ENCODE measurements at regions of chr14 and their contacts with region 1.

Region 1: DNA sequence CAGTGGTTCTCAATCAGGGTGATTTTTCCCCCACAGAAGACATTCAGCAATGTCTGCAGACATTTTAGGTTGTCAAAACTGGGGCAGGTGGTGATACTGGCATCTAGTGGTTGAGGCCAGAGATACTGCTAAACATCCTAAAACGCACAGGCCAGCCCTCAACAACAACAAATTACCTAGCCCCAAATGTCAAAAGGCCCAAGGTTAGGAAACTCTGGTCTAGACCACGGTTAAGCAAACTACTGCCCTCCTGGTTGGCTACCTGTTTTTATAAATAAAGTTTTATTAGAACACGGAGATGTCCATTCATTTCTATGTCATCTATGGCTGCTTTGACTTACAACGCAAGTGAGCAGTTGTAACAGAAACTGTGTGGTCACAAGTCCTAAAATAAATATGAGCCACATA is 186.7 kb downstream of the EFCAB11 start:
- DNase-seq: peak; percentile 28
- ATAC-seq: peak; percentile 92
- H3K4me3 Mint-ChIP-seq: no peak overlapping the region
- H3K27ac Mint-ChIP-seq: peak overlapping the region; percentile 67
- H3K4me1 Mint-ChIP-seq: peaks cover 31% of the 10 kb centered on the region
- H3K27me3 Mint-ChIP-seq: no peaks in the 10 kb centered on the region
- CTCF ChIP-seq: peak; percentile 20

Region 2: DNA sequence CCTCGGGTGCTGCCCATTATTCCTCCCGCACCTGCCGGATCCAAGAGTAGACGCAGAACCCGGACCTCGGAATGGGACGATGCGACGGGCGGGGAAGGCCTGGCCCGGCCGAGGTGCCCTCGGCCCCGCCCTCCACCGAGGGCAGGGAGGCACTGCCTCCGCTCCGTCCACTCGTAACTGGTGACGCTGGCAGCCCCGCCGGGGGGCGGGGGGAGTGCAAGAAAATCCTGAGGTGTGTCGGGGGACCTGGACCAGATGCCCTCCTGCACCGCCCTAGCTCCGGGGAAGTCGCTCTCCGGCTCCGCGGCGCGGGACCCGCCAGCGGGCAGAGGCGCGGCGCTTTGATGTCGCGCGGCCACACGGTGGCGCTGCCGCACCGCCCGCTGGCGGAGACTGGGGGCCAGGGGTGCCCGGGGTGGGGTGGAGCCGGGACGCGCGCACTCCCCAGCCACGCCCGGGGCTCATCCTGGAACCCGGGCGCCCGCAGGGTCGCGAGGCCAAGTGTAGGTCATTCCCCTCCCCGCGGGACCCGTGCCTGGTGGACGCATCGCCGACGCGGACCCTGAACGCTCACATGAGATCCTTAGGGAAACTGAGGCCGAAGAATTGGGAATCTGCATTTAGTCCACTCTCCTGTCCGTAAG is 740.6 kb before region 1 on chr14:
- CTCF ChIA-PET with region 1: interaction called, 5 read pairs
- POLR2A ChIA-PET with region 1: no interaction called
- intact Hi-C with region 1: loop called (anchors 1 kb)
- DNase-seq: peak; percentile 67
- ATAC-seq: peak; percentile 92
- H3K4me3 Mint-ChIP-seq: peak overlapping the region; percentile 65
- H3K27ac Mint-ChIP-seq: no peak overlapping the region
- H3K4me1 Mint-ChIP-seq: peaks cover 3% of the 10 kb centered on the region
- H3K27me3 Mint-ChIP-seq: peaks cover 41% of the 10 kb centered on the region
- CTCF ChIP-seq: peak; percentile 54

Region 3: DNA sequence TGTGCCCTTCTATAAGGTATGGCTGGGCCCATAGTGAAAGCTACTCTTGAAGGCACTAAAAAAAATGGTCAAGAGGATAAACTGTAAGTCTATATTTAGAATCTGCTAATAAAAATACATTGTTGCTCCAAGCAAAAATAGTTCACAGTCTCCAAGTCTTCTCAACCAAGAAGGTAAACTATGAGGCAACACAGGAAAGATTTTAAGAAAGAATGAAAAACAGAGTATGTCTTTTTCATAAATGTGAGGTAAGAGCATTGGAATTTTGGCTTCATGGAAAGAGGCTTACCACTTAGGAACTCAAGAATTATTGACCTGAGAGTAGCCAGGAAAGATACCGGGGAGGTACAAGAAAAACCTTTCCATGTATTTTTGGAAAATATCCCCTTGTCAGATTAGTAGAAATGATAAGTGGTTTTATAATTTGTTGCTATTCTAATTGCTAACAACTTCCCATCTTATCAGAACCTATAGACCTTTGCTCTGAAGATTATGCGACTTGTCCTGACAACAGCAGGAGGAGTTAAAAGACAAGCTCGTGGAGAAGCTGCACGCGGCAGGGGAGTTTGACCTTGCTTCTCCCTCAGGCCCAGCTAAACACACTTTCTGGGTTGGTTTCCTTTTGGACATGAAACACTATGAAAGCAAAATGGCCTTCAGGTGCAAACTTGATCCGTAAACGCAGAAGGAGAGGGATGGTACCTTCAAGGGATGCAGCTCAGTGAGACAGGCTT is 588.9 kb before region 1 on chr14:
- CTCF ChIA-PET with region 1: interaction called, 14 read pairs
- POLR2A ChIA-PET with region 1: no interaction called
- intact Hi-C with region 1: loop called (anchors 1 kb)
- DNase-seq: no peak
- ATAC-seq: no peak
- H3K4me3 Mint-ChIP-seq: no peak overlapping the region
- H3K27ac Mint-ChIP-seq: peak overlapping the region; percentile 31
- H3K4me1 Mint-ChIP-seq: peaks cover 19% of the 10 kb centered on the region
- H3K27me3 Mint-ChIP-seq: no peaks in the 10 kb centered on the region
- CTCF ChIP-seq: no peak

Region 4: DNA sequence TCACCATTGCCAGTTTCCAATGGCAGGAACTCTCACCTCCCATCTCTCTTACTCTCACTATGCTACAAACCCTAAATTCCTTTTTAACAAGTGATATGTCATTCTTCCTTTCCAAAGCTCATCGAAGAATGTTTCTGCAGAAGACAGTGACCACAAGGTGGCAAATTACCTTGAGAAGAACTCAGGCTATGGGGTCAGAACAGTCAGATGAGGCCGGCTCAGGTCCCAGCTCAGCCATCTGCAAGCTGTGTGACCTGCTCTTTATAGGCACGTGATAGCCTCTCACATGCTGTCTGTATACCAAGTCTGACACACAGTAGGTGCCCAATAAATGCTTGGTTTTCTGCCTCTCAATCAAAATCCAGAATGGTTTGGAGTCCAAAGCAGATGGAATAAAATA is 431.5 kb before region 1 on chr14:
- CTCF ChIA-PET with region 1: interaction called, 14 read pairs
- POLR2A ChIA-PET with region 1: no interaction called
- intact Hi-C with region 1: loop called (anchors 1 kb)
- DNase-seq: no peak
- ATAC-seq: peak; percentile 69
- H3K4me3 Mint-ChIP-seq: no peak overlapping the region
- H3K27ac Mint-ChIP-seq: peak overlapping the region; percentile 66
- H3K4me1 Mint-ChIP-seq: peaks cover 71% of the 10 kb centered on the region
- H3K27me3 Mint-ChIP-seq: no peaks in the 10 kb centered on the region
- CTCF ChIP-seq: no peak

Region 5: DNA sequence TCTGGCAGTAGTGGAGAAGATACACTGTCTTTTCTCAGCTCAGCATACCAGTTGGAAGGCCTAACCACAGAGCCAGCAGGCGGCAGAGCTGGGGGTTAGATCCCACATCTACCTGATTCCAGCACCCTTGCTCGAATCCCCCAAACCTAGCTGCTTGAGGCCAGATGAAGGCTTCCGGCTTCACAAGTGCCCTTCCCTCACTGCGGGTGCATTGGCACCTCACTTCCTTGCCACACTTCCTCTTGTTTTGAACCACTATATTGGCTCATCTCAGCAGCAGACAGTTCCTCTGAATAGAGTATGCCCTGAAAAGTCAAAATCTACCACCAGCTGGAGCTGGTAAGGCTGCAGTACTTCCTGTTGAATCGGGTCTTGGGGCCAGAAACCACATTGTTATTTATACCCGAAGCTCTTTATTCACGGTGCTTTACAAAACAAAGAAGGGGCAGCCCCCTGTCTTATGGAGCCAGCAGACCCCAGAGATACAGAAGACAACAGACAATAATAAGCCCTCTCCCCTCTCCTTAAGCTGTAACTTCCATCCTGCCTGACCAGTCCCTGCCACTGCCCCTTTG is 47.0 kb before region 1 on chr14:
- CTCF ChIA-PET with region 1: interaction called, 9 read pairs
- POLR2A ChIA-PET with region 1: interaction called, 5 read pairs
- intact Hi-C with region 1: loop called (anchors 1 kb)
- DNase-seq: peak; percentile 45
- ATAC-seq: peak; percentile 90
- H3K4me3 Mint-ChIP-seq: peak overlapping the region; percentile 69
- H3K27ac Mint-ChIP-seq: peak overlapping the region; percentile 95
- H3K4me1 Mint-ChIP-seq: peaks cover 66% of the 10 kb centered on the region
- H3K27me3 Mint-ChIP-seq: no peaks in the 10 kb centered on the region
- CTCF ChIP-seq: no peak

Region 6: GRCh38 chr14:89757313-89757939 is 10.4 kb before region 1 on chr14:
- CTCF ChIA-PET with region 1: no interaction called
- POLR2A ChIA-PET with region 1: no interaction called
- intact Hi-C with region 1: no loop called
- DNase-seq: no peak
- ATAC-seq: no peak
- H3K4me3 Mint-ChIP-seq: no peak overlapping the region
- H3K27ac Mint-ChIP-seq: no peak overlapping the region
- H3K4me1 Mint-ChIP-seq: peaks cover 13% of the 10 kb centered on the region
- H3K27me3 Mint-ChIP-seq: no peaks in the 10 kb centered on the region
- CTCF ChIP-seq: no peak

Measured in activated B cell treated with CpG ODN at 0.5 μM for 24 hours (primary cell).